GM12878 (cell line): ENCODE measurements at regions of chr12 and their contacts with region 1.

Region 1: DNA sequence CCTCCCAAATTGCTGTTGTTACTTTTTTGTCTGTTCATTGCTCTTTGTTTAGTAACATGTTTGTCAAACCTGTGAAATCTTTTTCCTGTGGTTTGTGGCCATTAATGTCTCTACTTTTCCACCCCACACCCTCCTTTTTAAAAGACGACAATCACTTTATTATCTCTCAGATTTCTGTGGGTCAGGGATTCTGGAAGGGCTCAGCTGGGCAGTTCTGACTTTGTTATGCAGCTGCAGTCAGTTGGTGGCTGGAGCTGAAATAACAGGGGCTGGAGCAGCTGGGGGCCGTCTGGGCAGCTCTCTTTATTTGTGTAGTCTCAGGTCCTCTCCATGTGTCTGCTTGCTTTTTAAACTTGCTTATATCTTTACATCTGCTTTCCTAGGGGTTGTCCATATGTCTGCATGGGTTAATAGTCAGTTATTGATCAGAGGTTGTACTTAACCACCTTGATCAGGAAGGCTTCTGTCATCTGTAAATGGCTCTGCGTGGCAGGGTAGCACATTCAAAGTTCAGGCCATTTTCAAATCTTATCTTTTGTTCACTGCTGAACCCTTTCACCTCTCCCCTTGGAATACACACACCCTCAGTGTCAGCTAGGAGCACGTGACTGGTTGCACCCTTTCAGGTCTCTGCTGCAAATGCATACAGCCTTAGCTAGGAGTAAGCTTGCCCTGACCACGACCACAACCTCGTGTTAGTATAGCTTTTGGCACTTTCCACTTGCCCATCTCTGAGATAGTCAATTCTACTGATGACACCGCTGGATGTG is 27.9 kb downstream of the BORCS5 start:
- DNase-seq: no peak
- ATAC-seq: peak; percentile 88
- H3K4me3 ChIP-seq: no peak overlapping the region
- H3K27ac ChIP-seq: no peak overlapping the region
- H3K4me1 ChIP-seq: peaks cover 7% of the 10 kb centered on the region
- H3K27me3 ChIP-seq: no peaks in the 10 kb centered on the region
- CTCF ChIP-seq: no peak
- EP300 ChIP-seq: 0 out of 4 replicates have a peak, but pooled peaks of 1 of the 2 experiments have one; percentile 11
- POLR2A ChIP-seq: no peak
- RAD21 ChIP-seq: no peak

Region 2: GRCh38 chr12:12254553-12254952 is 130.2 kb before region 1 on chr12:
- CTCF ChIA-PET with region 1: no interaction called
- POLR2A ChIA-PET with region 1: no interaction called
- RAD21 ChIA-PET with region 1: no interaction called
- SMC1A ChIA-PET with region 1: no interaction called
- in situ Hi-C with region 1: no loop called
- intact Hi-C with region 1: no loop called
- DNase-seq: no peak
- ATAC-seq: no peak
- H3K4me3 ChIP-seq: no peak overlapping the region
- H3K27ac ChIP-seq: no peak overlapping the region
- H3K4me1 ChIP-seq: no peaks in the 10 kb centered on the region
- H3K27me3 ChIP-seq: no peaks in the 10 kb centered on the region
- CTCF ChIP-seq: no peak
- EP300 ChIP-seq: no peak
- POLR2A ChIP-seq: no peak
- RAD21 ChIP-seq: no peak

Region 3: GRCh38 chr12:12398026-12398859 is 13.5 kb after region 1 on chr12:
- CTCF ChIA-PET with region 1: interaction called, 24 read pairs
- POLR2A ChIA-PET with region 1: interaction called, 4 read pairs
- RAD21 ChIA-PET with region 1: interaction called, 9 read pairs
- SMC1A ChIA-PET with region 1: interaction called, 24 read pairs
- in situ Hi-C with region 1: no loop called
- intact Hi-C with region 1: no loop called
- DNase-seq: no peak
- ATAC-seq: no peak
- H3K4me3 ChIP-seq: no peak overlapping the region
- H3K27ac ChIP-seq: no peak overlapping the region
- H3K4me1 ChIP-seq: no peaks in the 10 kb centered on the region
- H3K27me3 ChIP-seq: no peaks in the 10 kb centered on the region
- CTCF ChIP-seq: no peak
- EP300 ChIP-seq: no peak
- POLR2A ChIP-seq: no peak
- RAD21 ChIP-seq: 0 out of 2 replicates have a peak, but pooled peaks have one; percentile 11

Region 4: DNA sequence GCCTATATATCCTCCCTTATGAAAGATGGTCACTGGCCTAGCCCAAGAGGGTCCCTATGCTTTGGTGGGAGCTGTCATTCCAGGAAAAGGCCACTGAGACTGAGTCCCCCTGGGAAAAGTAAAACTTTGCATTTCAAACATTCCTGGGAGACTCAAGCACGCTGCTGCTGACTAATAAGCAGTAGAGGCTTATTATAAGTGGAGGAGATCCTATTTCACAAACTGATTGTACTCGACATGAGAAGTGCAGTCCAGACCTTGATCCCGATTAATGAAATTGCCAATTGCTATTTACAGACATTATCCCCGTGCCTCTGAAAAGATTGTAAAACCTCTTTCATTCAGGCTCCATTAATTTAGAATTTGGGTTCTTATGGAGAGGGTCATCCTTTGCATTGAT is 908.3 kb after region 1 on chr12:
- CTCF ChIA-PET with region 1: no interaction called
- POLR2A ChIA-PET with region 1: no interaction called
- RAD21 ChIA-PET with region 1: no interaction called
- SMC1A ChIA-PET with region 1: no interaction called
- in situ Hi-C with region 1: no loop called
- intact Hi-C with region 1: no loop called
- DNase-seq: no peak
- ATAC-seq: no peak
- H3K4me3 ChIP-seq: no peak overlapping the region
- H3K27ac ChIP-seq: no peak overlapping the region
- H3K4me1 ChIP-seq: no peaks in the 10 kb centered on the region
- H3K27me3 ChIP-seq: peaks cover 3 to 4% of the 10 kb centered on the region in 2 experiments; a peak in 3 of 4 replicates
- CTCF ChIP-seq: no peak
- EP300 ChIP-seq: no peak
- POLR2A ChIP-seq: no peak
- RAD21 ChIP-seq: no peak